ENCODE measurements at regions of chrX and their contacts with region 1.

Region 1: GRCh38 chrX:43557792-43558191 is 98.3 kb upstream of the MAOA start:
- DNase-seq: no peak
- H3K4me3 ChIP-seq: no peak overlapping the region
- H3K27ac ChIP-seq: no peak overlapping the region
- H3K4me1 ChIP-seq: peaks cover 0 to 7% (median 2%) of the 10 kb centered on the region in 4 donors
- H3K27me3 ChIP-seq: no peaks in the 10 kb centered on the region
- CTCF ChIP-seq: peak; percentile 51 to 63 (median 56)
- EP300 ChIP-seq: no peak
- POLR2A ChIP-seq: no peak

Region 2: GRCh38 chrX:41796577-41796976 is 1761.2 kb before region 1 on chrX:
- intact Hi-C with region 1: loop called (anchors 5 kb)
- DNase-seq: no peak
- H3K4me3 ChIP-seq: no peak overlapping the region
- H3K27ac ChIP-seq: no peak overlapping the region
- H3K4me1 ChIP-seq: peaks cover 0 to 9% (median 3%) of the 10 kb centered on the region in 4 donors
- H3K27me3 ChIP-seq: peaks cover 0 to 6% (median 0%) of the 10 kb centered on the region in 4 donors
- CTCF ChIP-seq: no peak
- EP300 ChIP-seq: no peak
- POLR2A ChIP-seq: no peak

Region 3: DNA sequence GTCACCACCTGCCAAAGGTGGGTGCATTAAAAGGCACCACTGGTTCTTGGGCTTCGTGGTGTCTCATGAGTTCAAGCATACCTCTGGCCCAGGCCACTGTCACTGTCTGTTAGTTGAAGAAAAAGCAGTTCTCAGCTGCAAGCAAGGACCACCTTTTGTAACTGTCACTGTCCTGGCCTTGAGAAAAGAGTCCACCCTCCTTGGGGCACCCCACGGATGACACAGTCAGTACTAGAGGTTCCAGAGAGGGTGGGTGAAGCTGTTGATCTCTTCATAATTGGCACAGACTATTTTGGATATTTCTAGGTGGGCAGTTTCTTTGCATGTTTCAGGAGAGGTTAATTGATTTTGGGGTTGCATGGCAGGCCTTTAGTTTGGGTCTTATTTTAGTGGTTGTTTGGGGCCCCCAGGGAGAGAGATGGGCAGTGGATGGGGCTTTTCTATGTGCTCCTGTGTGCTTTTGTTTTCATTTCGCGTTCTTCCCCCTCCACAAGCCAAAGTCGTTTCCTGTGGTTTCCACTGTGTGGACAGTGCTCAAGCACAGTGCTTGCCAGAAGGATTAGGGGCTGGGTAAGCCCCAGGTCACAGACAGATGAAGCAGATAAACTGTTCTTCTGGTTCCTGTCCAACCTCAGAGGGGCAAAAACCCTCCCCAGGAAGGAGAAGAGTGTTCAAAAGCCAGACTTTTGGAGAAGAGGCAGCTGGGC is 623.6 kb before region 1 on chrX:
- intact Hi-C with region 1: no loop called
- DNase-seq: no peak
- H3K4me3 ChIP-seq: no peak overlapping the region
- H3K27ac ChIP-seq: no peak overlapping the region
- H3K4me1 ChIP-seq: no peaks in the 10 kb centered on the region
- H3K27me3 ChIP-seq: no peaks in the 10 kb centered on the region
- CTCF ChIP-seq: no peak
- EP300 ChIP-seq: no peak
- POLR2A ChIP-seq: no peak

Region 4: DNA sequence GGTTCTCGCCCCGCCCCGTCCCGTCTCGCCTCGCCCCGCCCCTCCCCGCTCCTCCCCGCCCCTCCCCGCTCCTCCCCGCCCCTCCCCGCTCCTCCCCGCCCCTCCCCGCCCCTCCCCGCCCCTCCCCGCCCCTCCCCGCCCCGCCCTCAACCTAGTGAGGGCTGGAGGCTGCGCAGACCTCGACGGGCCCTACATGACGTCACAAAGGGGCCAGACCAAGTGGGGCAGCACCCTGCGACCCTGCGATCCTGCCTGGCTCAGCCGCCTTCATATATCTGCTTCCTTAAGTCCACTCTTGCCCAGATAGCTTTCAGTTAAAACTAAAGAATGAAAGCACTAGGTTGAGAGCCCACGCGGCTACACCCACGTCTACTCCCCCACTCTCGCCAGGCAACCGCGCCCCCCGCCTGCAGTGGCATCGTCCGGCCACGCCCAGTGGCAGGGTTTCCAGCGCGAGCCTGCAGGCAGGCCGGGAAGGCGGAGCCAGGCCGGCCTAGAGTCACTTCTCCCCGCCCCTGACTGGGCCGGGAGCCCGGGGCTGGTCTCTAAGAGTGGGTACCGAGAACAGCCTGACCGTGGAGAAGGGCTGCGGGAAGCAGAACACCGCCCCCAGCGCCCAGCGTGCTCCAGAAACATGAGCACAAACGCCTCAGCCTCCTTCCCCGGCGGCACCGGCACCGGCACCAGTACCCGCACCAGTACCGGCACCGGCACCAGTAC is 96.8 kb after region 1 on chrX:
- intact Hi-C with region 1: loop called (anchors 5 kb)
- DNase-seq: peak; percentile 96
- H3K4me3 ChIP-seq: peak overlapping the region; percentile 70 to 88 (median 72)
- H3K27ac ChIP-seq: peak overlapping the region; percentile 82 to 95 (median 94)
- H3K4me1 ChIP-seq: peaks cover 0 to 5% (median 2%) of the 10 kb centered on the region in 4 donors
- H3K27me3 ChIP-seq: no peaks in the 10 kb centered on the region
- CTCF ChIP-seq: peak; percentile 18 to 43 (median 18)
- EP300 ChIP-seq: no peak
- POLR2A ChIP-seq: peak; percentile 69

Region 5: GRCh38 chrX:43750248-43750676 is 192.5 kb after region 1 on chrX:
- intact Hi-C with region 1: loop called (anchors 2 kb)
- DNase-seq: no peak
- H3K4me3 ChIP-seq: no peak overlapping the region
- H3K27ac ChIP-seq: no peak overlapping the region
- H3K4me1 ChIP-seq: peaks cover 0 to 11% (median 3%) of the 10 kb centered on the region in 4 donors
- H3K27me3 ChIP-seq: no peaks in the 10 kb centered on the region
- CTCF ChIP-seq: peak; percentile 51 to 66 (median 54)
- EP300 ChIP-seq: no peak
- POLR2A ChIP-seq: no peak

Measured in esophagus muscularis mucosa (tissue), 4 donors.